Caco-2 (cell line): ENCODE measurements at regions of chr4 and their contacts with region 1.

Region 1: GRCh38 chr4:15043226-15043625 is 40.9 kb downstream of the CPEB2 start:
- DNase-seq: peak in 1 of 2 experiments; percentile 2
- H3K4me3 ChIP-seq: no peak overlapping the region
- H3K4me3 Mint-ChIP-seq: no peak overlapping the region
- H3K27ac Mint-ChIP-seq: no peak overlapping the region
- H3K4me1 ChIP-seq: peaks cover 3% of the 10 kb centered on the region; the same call in 1 of the 2 replicates
- H3K4me1 Mint-ChIP-seq: no peaks in the 10 kb centered on the region
- H3K27me3 ChIP-seq: no peaks in the 10 kb centered on the region
- H3K27me3 Mint-ChIP-seq: no peaks in the 10 kb centered on the region
- CTCF ChIP-seq: peak; percentile 27 to 31

Region 2: GRCh38 chr4:15162465-15163283 is 119.4 kb after region 1 on chr4:
- CTCF ChIA-PET with region 1: no interaction called
- POLR2A ChIA-PET with region 1: no interaction called
- intact Hi-C with region 1: loop called (anchors 1 kb)
- DNase-seq: no peak
- H3K4me3 ChIP-seq: no peak overlapping the region
- H3K4me3 Mint-ChIP-seq: no peak overlapping the region
- H3K27ac Mint-ChIP-seq: no peak overlapping the region
- H3K4me1 ChIP-seq: no peaks in the 10 kb centered on the region
- H3K4me1 Mint-ChIP-seq: peaks cover 7% of the 10 kb centered on the region
- H3K27me3 ChIP-seq: no peaks in the 10 kb centered on the region
- H3K27me3 Mint-ChIP-seq: peaks cover 6% of the 10 kb centered on the region
- CTCF ChIP-seq: peak; percentile 13 to 21

Region 3: DNA sequence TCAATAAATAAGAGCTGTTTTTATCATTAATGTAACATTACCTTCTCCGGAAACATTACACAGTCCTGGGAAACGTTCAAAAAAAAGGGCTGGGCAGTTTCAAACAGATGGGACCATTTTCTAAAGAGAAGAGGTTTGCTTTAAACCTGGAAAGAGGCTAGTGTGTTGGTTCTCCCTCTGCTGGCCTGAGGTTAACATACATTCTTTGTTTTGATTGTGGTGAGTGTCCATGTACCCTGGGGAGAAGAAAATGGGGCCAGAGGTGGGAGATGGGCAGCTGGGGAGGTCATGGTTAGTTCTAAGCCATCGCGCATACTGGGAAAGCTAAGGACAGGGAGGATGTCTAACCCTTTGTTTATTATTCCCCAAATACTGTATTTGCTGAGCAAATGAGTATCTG is 153.8 kb after region 1 on chr4:
- CTCF ChIA-PET with region 1: no interaction called
- POLR2A ChIA-PET with region 1: no interaction called
- intact Hi-C with region 1: loop called (anchors 1 kb)
- DNase-seq: peak in 1 of 2 experiments; percentile 5
- H3K4me3 ChIP-seq: no peak overlapping the region
- H3K4me3 Mint-ChIP-seq: no peak overlapping the region
- H3K27ac Mint-ChIP-seq: no peak overlapping the region
- H3K4me1 ChIP-seq: no peaks in the 10 kb centered on the region
- H3K4me1 Mint-ChIP-seq: no peaks in the 10 kb centered on the region
- H3K27me3 ChIP-seq: no peaks in the 10 kb centered on the region
- H3K27me3 Mint-ChIP-seq: no peaks in the 10 kb centered on the region
- CTCF ChIP-seq: peak; percentile 14 to 24